PC-9 (cell line): ENCODE measurements at regions of chr3 and their contacts with region 1.

Region 1: GRCh38 chr3:185807445-185808068 is 17.3 kb downstream of the IGF2BP2 start:
- DNase-seq: peak in 1 of 2 experiments; percentile 60
- H3K4me3 ChIP-seq: no peak overlapping the region
- H3K27ac ChIP-seq: no peak overlapping the region
- H3K4me1 ChIP-seq: no peaks in the 10 kb centered on the region; the same call in 1 of the 2 replicates
- H3K27me3 ChIP-seq: no peaks in the 10 kb centered on the region
- CTCF ChIP-seq: no peak

Region 2: GRCh38 chr3:185282696-185283394 is 524.7 kb before region 1 on chr3:
- CTCF ChIA-PET with region 1: no interaction called
- POLR2A ChIA-PET with region 1: no interaction called
- intact Hi-C with region 1: no loop called
- DNase-seq: peak; percentile 96 to 98
- H3K4me3 ChIP-seq: peak overlapping the region; percentile 95
- H3K27ac ChIP-seq: peak overlapping the region; percentile 55
- H3K4me1 ChIP-seq: peaks cover 8% of the 10 kb centered on the region
- H3K27me3 ChIP-seq: no peaks in the 10 kb centered on the region
- CTCF ChIP-seq: no peak

Region 3: GRCh38 chr3:185887066-185887465 is 79.5 kb after region 1 on chr3:
- CTCF ChIA-PET with region 1: no interaction called
- POLR2A ChIA-PET with region 1: interaction called, 15 read pairs
- intact Hi-C with region 1: no loop called
- DNase-seq: no peak
- H3K4me3 ChIP-seq: no peak overlapping the region
- H3K27ac ChIP-seq: no peak overlapping the region
- H3K4me1 ChIP-seq: no peaks in the 10 kb centered on the region
- H3K27me3 ChIP-seq: no peaks in the 10 kb centered on the region
- CTCF ChIP-seq: no peak

Region 4: DNA sequence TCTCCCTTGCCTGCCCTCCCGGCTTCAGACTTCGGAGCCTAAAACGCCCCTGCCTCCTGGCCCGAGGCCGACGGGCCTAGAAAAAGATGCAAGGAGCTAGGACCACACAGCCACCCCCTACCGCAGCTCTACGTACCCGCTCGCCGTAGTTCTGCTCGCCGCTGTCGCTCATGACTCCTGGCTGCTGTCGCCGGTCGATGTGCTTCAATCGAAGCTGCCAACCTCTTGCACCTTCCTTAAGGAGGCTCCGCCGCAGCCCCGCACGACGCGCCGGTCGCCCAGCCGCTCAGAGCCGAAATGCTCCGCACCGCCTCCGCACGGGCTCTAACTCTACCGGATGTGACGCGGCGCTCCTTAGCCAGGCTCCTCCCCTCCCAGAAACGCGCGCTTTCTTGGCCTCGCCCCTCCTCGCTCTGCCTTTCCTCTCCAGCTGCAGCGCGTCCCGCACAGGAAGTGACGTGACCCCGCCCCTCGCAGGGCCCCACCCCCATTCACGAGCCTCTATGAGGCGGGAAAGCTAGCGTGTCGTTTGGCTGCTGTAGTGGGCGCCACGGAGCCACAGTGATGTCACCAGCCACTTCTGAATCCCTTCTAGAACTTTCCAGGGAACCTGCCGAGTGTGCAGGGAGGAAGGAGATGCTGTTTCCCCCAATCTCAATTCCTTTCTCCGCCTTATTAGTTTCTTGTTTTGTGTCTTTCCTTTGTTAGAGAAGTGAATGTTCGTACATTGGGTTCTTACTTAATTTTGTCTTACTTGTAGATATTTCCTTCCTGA is 130.3 kb after region 1 on chr3 and contains the start of gene TRA2B:
- CTCF ChIA-PET with region 1: no interaction called
- POLR2A ChIA-PET with region 1: interaction called, 24 read pairs
- intact Hi-C with region 1: no loop called
- DNase-seq: peak; percentile 93 to 99
- H3K4me3 ChIP-seq: peak within 1 kb of the TSS; percentile 98
- H3K27ac ChIP-seq: peak within 1 kb of the TSS; percentile 95
- H3K4me1 ChIP-seq: peaks cover 64% of the 10 kb centered on the region
- H3K27me3 ChIP-seq: no peaks in the 10 kb centered on the region
- CTCF ChIP-seq: peak; percentile 22; the same call in 1 of the 2 replicates
- total RNA-seq, gene TRA2B: 117 and 158 TPM in 2 replicates